ENCODE measurements at regions of chr16 and their contacts with region 1.

Region 1: DNA sequence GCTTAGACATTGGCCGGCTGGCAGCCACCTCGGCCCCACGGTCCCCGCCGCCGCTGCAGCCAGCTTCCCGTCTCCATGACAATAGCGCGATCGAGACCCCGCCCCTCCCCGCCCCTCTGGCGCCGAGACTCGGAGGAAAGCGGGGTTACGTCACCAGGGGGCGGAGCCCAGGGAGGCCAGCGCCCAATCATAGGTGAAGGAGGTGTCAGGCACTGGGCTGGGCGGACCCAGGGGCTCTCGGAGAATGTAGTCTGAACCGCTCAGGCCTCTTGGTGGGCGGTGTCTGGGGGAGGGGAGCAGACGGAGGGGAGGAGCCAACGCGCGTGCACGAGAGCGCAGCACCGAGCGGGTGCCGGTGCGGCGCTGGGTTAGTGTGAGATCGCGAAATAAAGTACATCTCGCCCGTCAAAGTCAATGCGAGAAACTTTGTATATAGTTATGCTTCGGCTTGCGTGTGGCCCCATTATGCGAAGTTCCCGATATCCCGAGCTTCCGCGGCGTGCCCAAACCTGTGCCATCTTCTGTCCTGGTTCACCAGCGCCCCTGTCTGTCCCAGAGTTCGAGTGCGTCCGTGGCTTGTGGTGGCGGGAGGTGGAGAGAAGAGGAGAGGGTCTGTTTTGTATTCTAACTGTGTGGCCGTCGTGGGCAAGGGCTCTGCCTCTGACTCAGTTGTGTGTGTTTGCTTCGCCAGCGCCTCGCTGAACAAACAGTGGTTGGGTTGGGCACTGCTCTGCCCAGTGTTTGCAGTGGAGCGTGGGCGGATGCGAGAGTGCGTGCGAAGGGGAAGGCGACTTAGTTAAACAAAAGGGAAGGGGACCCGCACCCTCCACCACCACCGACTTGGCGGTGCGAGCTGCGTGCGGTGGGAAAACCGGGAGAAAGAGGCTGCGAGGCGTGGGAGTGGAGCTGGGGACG is 1.3 kb upstream of the IRX5 start:
- DNase-seq: peak; percentile 99
- H3K4me3 ChIP-seq: peak overlapping the region; percentile 73
- CTCF ChIP-seq: peak; percentile 27

Region 2: GRCh38 chr16:54286090-54286993 is 643.0 kb before region 1 on chr16 and contains the start of gene IRX3:
- in situ Hi-C with region 1: loop called (anchors 25 kb)
- DNase-seq: peak; percentile 91
- H3K4me3 ChIP-seq: peak within 1 kb of the TSS; percentile 64
- CTCF ChIP-seq: no peak

Measured in astrocyte of the spinal cord (primary cell).